T-cell (primary cell): ENCODE measurements at regions of chr1 and their contacts with region 1.

Region 1: DNA sequence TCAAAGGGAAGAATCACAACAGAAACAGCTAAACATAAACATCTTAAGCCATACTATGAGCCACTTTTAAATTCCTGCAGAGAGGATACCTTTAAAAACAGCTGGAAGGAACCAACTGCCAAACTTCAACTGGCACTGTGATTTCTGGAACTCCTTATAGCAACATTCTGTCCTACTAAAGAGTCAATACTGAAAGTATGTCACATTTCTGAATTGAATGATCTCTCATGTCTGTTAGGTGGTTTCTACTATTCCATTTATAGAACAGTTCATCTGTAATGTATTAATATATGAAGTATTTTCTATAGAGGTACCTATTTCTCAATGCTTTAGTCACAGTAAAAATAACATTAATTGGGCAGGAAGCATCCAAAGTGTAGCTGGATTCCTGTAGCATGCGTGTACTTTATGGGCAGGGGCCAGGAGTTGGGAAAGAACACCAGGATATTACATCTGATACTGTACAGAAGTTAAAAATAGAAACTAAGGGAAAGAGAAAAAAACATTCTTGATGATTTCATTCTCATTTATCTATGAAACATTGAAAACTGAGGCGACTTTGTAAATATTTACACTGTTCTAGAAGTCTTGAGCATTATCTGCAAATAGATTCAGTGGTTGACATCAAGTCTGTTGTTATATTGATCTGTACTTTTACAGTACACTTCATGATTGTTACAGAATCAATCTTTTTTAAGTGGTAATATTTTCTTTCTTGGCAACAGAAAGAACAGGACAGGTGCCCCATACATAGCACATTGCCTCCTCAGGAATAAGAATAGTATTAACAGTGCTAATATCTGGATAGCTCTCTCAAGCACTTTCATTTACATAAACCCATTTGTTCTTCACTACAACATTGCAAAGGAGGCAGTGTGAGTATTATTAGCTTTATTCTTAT is 6.1 kb upstream of the ZNF281 start:
- DNase-seq: no peak
- ATAC-seq: no peak
- H3K4me3 ChIP-seq: no peak overlapping the region
- H3K4me3 Mint-ChIP-seq: no peak overlapping the region
- H3K27ac ChIP-seq: no peak overlapping the region
- H3K27ac Mint-ChIP-seq: no peak overlapping the region
- H3K4me1 ChIP-seq: no peaks in the 10 kb centered on the region
- H3K4me1 Mint-ChIP-seq: peaks cover 0 to 3% (median 2%) of the 10 kb centered on the region in 3 donors
- H3K27me3 ChIP-seq: no peaks in the 10 kb centered on the region
- H3K27me3 Mint-ChIP-seq: no peaks in the 10 kb centered on the region

Region 2: GRCh38 chr1:200302192-200302920 is 113.6 kb before region 1 on chr1:
- CTCF ChIA-PET with region 1: interaction called in 1 of 2 experiments, 3 read pairs
- POLR2A ChIA-PET with region 1: interaction called in 1 of 2 experiments, 16 read pairs
- DNase-seq: peak; percentile 46 to 82 (median 64)
- ATAC-seq: peak; percentile 92 to 97 (median 94)
- H3K4me3 ChIP-seq: peak overlapping the region; percentile 55 to 88
- H3K4me3 Mint-ChIP-seq: peak overlapping the region; percentile 87 to 92 (median 90)
- H3K27ac ChIP-seq: peak overlapping the region; percentile 63
- H3K27ac Mint-ChIP-seq: peak overlapping the region; percentile 85 to 91
- H3K4me1 ChIP-seq: peaks cover 4 to 9% of the 10 kb centered on the region in 2 experiments
- H3K4me1 Mint-ChIP-seq: peaks cover 14 to 31% (median 22%) of the 10 kb centered on the region in 3 donors
- H3K27me3 ChIP-seq: no peaks in the 10 kb centered on the region
- H3K27me3 Mint-ChIP-seq: peaks cover 0 to 5% of the 10 kb centered on the region in 2 donors

Region 3: DNA sequence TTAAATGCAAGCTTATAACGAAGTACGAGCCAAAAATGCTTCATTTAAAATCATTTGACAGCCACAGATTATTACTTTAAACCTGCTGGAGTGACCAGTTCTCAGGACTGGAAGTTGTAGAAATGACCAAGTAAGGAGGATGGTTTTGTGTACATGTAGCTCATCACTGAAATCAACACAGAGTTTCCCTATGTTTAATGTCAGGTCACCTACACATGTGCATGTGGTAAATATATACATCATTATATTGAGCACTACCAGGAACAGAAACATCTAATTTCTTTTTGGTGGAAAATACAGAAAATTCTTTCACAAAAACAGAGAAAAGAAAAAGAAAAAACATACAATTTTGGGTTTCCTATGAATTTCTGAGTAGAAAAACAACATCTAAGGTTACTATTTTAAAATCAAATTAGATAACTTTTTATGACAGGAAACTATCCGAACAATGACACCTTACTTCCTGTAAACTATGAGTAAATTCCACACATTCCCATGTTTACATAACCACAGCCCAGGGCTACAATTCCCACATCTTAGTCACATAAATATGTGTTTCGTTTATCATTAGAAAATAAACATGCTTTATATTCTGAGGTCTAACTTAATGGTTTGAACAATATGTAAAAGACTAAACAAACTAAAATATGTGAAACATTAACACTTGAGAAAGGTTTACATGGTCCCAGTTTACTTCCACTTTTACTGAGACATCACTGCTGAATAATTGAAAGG is 79.7 kb before region 1 on chr1:
- CTCF ChIA-PET with region 1: no interaction called
- POLR2A ChIA-PET with region 1: no interaction called
- DNase-seq: no peak
- ATAC-seq: no peak
- H3K4me3 ChIP-seq: no peak overlapping the region
- H3K4me3 Mint-ChIP-seq: no peak overlapping the region
- H3K27ac ChIP-seq: no peak overlapping the region
- H3K27ac Mint-ChIP-seq: peak overlapping the region in 1 of 2 donors; percentile 68
- H3K4me1 ChIP-seq: peaks cover 9 to 20% of the 10 kb centered on the region in 2 experiments
- H3K4me1 Mint-ChIP-seq: peaks cover 28 to 29% (median 28%) of the 10 kb centered on the region in 3 donors
- H3K27me3 ChIP-seq: no peaks in the 10 kb centered on the region
- H3K27me3 Mint-ChIP-seq: no peaks in the 10 kb centered on the region

Region 4: GRCh38 chr1:200639790-200640669 is 224.1 kb after region 1 on chr1:
- CTCF ChIA-PET with region 1: no interaction called
- POLR2A ChIA-PET with region 1: no interaction called
- DNase-seq: peak in 4 of 35 experiments; percentile 13 to 22 (median 18)
- ATAC-seq: no peak
- H3K4me3 ChIP-seq: no peak overlapping the region
- H3K4me3 Mint-ChIP-seq: no peak overlapping the region
- H3K27ac ChIP-seq: no peak overlapping the region
- H3K27ac Mint-ChIP-seq: no peak overlapping the region
- H3K4me1 ChIP-seq: no peaks in the 10 kb centered on the region
- H3K4me1 Mint-ChIP-seq: no peaks in the 10 kb centered on the region
- H3K27me3 ChIP-seq: no peaks in the 10 kb centered on the region
- H3K27me3 Mint-ChIP-seq: no peaks in the 10 kb centered on the region